ENCODE measurements at regions of chr20 and their contacts with region 1.

Region 1: GRCh38 chr20:37901654-37902503 is 1.0 kb upstream of the VSTM2L start:
- DNase-seq: no peak
- ATAC-seq: peak; percentile 50 to 61

Region 2: DNA sequence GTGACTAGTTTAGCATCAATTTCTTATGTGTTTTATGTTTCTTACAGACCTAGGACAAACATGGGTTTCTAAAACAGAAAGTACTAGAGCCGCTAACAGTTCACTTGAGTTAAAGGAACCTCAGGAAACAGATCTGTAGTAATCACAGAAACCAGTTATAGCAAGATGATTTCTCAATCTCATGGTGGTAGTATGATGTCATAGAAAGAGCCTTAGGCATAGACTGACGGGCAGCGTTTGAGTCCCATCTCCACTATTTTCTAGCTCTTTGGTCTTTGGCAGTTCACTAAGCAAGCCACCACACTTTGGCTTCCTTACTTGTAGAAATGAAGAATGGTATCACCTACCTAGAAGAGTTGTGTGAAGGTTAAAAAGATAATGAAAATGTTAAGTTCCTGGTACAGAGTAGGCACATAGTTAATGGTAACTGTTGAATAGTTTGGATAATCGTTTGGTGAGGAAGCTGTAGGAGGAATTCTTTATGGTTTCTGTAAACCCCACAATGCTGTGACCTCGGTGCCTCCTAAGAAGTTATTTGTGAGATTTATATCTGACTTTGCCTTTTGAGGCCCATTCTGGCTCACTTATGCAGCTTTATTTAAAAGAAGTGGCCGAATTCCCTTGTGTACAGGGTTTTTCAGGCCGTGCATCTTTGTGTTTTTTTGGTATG is 186.7 kb before region 1 on chr20:
- intact Hi-C with region 1: no loop called
- DNase-seq: no peak
- ATAC-seq: no peak

Region 3: DNA sequence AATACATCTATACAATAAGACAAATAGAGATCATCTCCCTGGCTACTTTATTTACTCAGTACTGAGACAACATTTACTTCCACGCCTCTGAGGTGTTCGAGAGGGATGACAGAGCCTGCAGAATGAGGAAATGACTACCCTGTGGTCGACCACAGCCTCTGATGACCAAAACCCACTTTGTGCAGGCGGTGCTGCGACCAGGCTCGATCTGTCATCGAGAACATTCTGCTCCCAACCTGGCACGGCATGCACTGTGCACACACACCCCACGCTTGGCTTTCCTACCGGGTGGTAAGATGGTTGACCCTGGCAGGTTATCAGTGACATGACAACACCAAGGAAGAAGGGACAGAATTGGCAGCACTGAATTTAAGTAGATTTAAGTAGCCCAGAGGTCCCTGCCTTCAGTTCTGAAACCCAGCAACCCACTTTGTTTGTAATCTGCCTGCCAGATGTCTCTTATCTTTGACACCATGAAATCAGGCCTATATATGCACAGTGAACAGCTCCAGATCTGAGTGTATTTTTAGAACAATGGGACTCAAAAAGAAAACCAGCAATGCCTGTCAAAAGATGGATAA is 88.8 kb after region 1 on chr20:
- intact Hi-C with region 1: loop called in 1 of 2 experiments (anchors 5 kb)
- DNase-seq: peak; percentile 74
- ATAC-seq: peak; percentile 70 to 75

Measured in left cardiac atrium (tissue), 4 donors.